CD8-positive, alpha-beta T cell (primary cell): ENCODE measurements at regions of chr16 and their contacts with region 1.

Region 1: GRCh38 chr16:84952335-84953189 is 58.8 kb downstream of the ZDHHC7 start:
- DNase-seq: peak; percentile 42 to 84 (median 67)
- ATAC-seq: peak; percentile 92
- H3K4me3 ChIP-seq: no peak overlapping the region
- H3K4me3 Mint-ChIP-seq: no peak overlapping the region
- H3K27ac ChIP-seq: no peak overlapping the region
- H3K27ac Mint-ChIP-seq: no peak overlapping the region
- H3K4me1 ChIP-seq: peaks cover 16% of the 10 kb centered on the region
- H3K4me1 Mint-ChIP-seq: peaks cover 9% of the 10 kb centered on the region
- H3K27me3 ChIP-seq: peaks cover 0 to 4% of the 10 kb centered on the region in 2 experiments
- H3K27me3 Mint-ChIP-seq: no peaks in the 10 kb centered on the region
- CTCF ChIP-seq: peak; percentile 93

Region 2: DNA sequence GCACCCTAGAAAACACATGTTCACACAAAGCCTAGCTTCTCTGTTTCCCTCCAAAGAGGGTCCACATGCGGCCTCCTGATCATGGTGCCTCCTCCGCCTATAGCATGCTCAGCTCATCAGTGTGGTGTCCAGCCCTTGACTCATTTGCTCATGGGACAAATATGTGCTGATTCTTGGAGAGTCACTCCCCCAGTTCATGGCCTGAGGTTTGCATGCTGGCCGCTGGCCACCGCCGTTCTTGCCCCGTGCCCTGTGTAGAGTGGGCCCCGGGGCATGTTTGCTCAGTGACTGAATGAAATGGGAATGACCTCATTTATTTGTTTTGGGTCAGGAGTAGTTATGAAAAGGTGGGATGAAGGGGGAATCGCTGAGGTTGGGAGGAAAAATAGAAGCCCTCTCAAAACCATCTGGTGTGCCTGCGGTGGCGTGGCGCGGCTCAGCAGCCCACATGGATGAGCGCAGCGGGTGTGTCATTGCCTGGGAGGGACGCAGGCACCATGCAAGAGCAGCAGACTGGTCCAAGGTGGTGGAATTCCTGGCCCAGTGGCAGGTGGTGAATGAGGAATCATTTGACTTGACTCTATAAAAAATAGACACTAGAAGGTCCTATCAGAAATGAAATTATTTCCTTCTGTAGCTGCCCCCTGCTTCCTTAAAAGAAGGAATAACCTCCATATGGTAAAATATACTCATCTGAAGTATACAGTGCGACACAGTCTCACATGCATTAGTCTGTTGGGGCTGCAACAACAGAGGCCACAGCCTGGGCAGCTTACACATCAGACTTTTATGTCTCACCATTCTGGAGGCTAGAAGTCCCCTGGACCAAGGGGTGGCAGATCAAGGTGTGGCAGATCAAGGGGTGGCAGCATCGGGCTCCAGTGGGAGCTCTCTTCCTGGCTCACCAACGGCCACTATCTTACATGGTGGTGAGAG is 101.1 kb before region 1 on chr16:
- CTCF ChIA-PET with region 1: no interaction called
- POLR2A ChIA-PET with region 1: no interaction called
- intact Hi-C with region 1: no loop called
- DNase-seq: no peak
- ATAC-seq: no peak
- H3K4me3 ChIP-seq: no peak overlapping the region
- H3K4me3 Mint-ChIP-seq: no peak overlapping the region
- H3K27ac ChIP-seq: no peak overlapping the region
- H3K27ac Mint-ChIP-seq: no peak overlapping the region
- H3K4me1 ChIP-seq: no peaks in the 10 kb centered on the region
- H3K4me1 Mint-ChIP-seq: no peaks in the 10 kb centered on the region
- H3K27me3 ChIP-seq: no peaks in the 10 kb centered on the region
- H3K27me3 Mint-ChIP-seq: peaks cover 15% of the 10 kb centered on the region
- CTCF ChIP-seq: no peak

Region 3: GRCh38 chr16:84925092-84925772 is 27.3 kb before region 1 on chr16:
- CTCF ChIA-PET with region 1: interaction called, 19 read pairs
- POLR2A ChIA-PET with region 1: no interaction called
- intact Hi-C with region 1: no loop called
- DNase-seq: peak; percentile 37 to 81 (median 64)
- ATAC-seq: peak; percentile 65
- H3K4me3 ChIP-seq: no peak overlapping the region
- H3K4me3 Mint-ChIP-seq: no peak overlapping the region
- H3K27ac ChIP-seq: no peak overlapping the region
- H3K27ac Mint-ChIP-seq: no peak overlapping the region
- H3K4me1 ChIP-seq: peaks cover 1% of the 10 kb centered on the region
- H3K4me1 Mint-ChIP-seq: peaks cover 3% of the 10 kb centered on the region
- H3K27me3 ChIP-seq: no peaks in the 10 kb centered on the region
- H3K27me3 Mint-ChIP-seq: peaks cover 7% of the 10 kb centered on the region
- CTCF ChIP-seq: peak; percentile 72

Region 4: GRCh38 chr16:84933774-84934631 is 18.6 kb before region 1 on chr16:
- CTCF ChIA-PET with region 1: interaction called, 16 read pairs
- POLR2A ChIA-PET with region 1: no interaction called
- intact Hi-C with region 1: no loop called
- DNase-seq: no peak
- ATAC-seq: no peak
- H3K4me3 ChIP-seq: no peak overlapping the region
- H3K4me3 Mint-ChIP-seq: no peak overlapping the region
- H3K27ac ChIP-seq: no peak overlapping the region
- H3K27ac Mint-ChIP-seq: no peak overlapping the region
- H3K4me1 ChIP-seq: peaks cover 4% of the 10 kb centered on the region
- H3K4me1 Mint-ChIP-seq: peaks cover 3% of the 10 kb centered on the region
- H3K27me3 ChIP-seq: no peaks in the 10 kb centered on the region
- H3K27me3 Mint-ChIP-seq: no peaks in the 10 kb centered on the region
- CTCF ChIP-seq: no peak

Region 5: DNA sequence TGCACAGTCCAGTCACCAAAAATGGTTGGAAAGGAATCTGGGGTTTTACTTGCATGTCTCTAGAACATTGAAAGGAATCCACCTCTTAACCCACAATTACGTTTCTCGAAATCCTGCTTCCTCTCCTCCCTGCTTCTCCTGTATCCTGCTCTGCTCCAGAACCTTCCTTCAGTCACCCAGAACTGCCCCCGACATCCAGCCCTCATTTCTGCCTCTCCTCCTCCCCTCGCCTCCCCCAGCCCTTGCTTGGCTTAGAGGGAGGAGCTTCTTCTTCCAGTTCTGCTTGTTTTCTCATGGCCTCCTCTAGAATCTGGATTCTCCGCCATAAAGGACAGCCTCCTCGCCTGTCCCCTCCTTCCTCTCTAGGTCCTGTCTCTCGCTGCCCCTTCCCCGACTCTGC is 10.5 kb after region 1 on chr16:
- CTCF ChIA-PET with region 1: interaction called, 66 read pairs
- POLR2A ChIA-PET with region 1: no interaction called
- intact Hi-C with region 1: no loop called
- DNase-seq: no peak
- ATAC-seq: no peak
- H3K4me3 ChIP-seq: no peak overlapping the region
- H3K4me3 Mint-ChIP-seq: no peak overlapping the region
- H3K27ac ChIP-seq: no peak overlapping the region
- H3K27ac Mint-ChIP-seq: no peak overlapping the region
- H3K4me1 ChIP-seq: no peaks in the 10 kb centered on the region
- H3K4me1 Mint-ChIP-seq: no peaks in the 10 kb centered on the region
- H3K27me3 ChIP-seq: no peaks in the 10 kb centered on the region
- H3K27me3 Mint-ChIP-seq: peaks cover 5% of the 10 kb centered on the region
- CTCF ChIP-seq: no peak

Region 6: DNA sequence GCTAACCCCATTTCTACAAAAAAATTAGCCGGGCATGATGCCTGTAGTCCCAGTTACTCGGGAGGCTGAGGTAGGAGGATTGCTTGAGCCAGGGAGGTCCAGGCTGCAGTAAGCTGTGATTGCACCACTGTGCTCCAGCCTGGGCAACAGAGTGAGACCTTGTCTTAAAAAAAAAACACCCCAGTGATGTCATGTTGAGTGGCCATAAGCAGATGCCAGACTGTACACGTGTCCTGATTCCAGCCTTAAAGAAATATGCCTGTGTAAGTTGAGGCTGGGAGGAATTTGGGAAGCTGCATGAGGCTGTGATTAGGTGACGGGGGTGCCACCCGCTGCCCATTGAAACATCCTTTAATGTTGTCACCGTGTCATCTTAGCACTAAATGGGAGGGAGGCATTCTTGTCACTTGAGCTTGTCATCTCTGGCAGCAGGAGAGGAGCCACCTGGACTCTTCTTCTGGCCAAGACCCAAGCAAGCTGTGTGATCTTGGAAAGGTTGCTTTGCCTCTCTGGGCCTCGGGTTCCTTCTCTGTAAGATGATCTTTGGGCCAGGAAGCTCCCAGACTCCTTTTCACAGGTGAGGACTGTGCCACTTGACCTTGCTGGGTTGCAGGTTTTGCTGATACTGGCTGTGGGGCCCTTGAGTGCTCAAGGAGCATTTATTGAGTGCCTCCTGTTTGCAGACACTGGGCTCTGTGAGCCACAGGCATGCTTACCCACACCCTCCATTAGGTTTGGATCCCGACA is 258.0 kb after region 1 on chr16:
- CTCF ChIA-PET with region 1: no interaction called
- POLR2A ChIA-PET with region 1: no interaction called
- intact Hi-C with region 1: no loop called
- DNase-seq: no peak
- ATAC-seq: no peak
- H3K4me3 ChIP-seq: no peak overlapping the region
- H3K4me3 Mint-ChIP-seq: no peak overlapping the region
- H3K27ac ChIP-seq: no peak overlapping the region
- H3K27ac Mint-ChIP-seq: no peak overlapping the region
- H3K4me1 ChIP-seq: no peaks in the 10 kb centered on the region
- H3K4me1 Mint-ChIP-seq: no peaks in the 10 kb centered on the region
- H3K27me3 ChIP-seq: no peaks in the 10 kb centered on the region
- H3K27me3 Mint-ChIP-seq: peaks cover 3% of the 10 kb centered on the region
- CTCF ChIP-seq: no peak